Activated T-helper 2 cell treated with anti-CD3 and anti-CD28 coated beads, Interferon-gamma antibody, Interleukin-2, Interleukin-4, amounts not matched to agents 10 μg/mL and 5 μg/mL and 100 μg/mL, durations not matched to agents 14 hours and 24 hours and 36 hours (primary cell): ENCODE measurements at regions of chr3 and their contacts with region 1.

Region 1: DNA sequence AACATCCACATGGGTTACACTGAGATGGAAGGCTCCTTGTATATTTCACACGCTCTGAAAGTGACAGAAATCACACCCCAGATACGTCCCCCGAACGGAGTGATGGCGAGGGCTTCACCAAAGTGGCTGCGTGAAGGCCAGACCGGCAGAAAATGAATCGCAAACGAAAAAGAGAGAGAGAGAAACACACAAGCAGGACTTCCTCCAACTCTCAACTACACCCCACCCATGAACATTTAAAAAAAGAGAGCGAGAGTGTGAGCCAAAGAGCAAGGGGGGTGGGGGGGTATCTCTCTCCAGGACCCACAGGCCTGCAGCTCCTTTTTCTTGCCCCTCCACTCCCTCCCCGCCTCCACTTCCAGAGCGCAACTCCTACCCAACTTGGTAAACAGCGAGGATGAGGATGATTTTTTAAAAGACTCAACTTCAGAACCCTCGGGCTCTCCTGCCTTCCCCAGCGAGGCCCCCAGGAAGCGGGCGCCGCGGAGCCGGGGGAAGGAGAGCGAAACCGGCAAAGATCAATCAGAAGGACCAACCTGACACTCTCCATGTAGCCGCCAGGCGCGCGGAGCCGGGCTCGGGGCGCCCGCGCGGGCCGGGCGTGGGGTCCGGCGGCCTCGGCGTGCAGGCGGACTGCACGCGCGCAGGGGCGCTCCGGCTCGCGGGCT is 519.1 kb downstream of the FOXP1 start:
- DNase-seq: peak; percentile 68
- H3K4me3 Mint-ChIP-seq: no peak overlapping the region
- H3K27ac Mint-ChIP-seq: no peak overlapping the region
- H3K4me1 Mint-ChIP-seq: peaks cover 58% of the 10 kb centered on the region
- H3K27me3 Mint-ChIP-seq: no peaks in the 10 kb centered on the region

Region 2: GRCh38 chr3:70550723-70551319 is 513.6 kb before region 1 on chr3:
- intact Hi-C with region 1: loop called (anchors 10 kb)
- DNase-seq: peak; percentile 44
- H3K4me3 Mint-ChIP-seq: no peak overlapping the region
- H3K27ac Mint-ChIP-seq: no peak overlapping the region
- H3K4me1 Mint-ChIP-seq: no peaks in the 10 kb centered on the region
- H3K27me3 Mint-ChIP-seq: peaks cover 22% of the 10 kb centered on the region

Region 3: GRCh38 chr3:71050538-71051258 is 13.7 kb before region 1 on chr3:
- intact Hi-C with region 1: loop called (anchors 1 kb)
- DNase-seq: no peak
- H3K4me3 Mint-ChIP-seq: peak overlapping the region; percentile 2
- H3K27ac Mint-ChIP-seq: peak overlapping the region; percentile 86
- H3K4me1 Mint-ChIP-seq: peaks cover 95% of the 10 kb centered on the region
- H3K27me3 Mint-ChIP-seq: no peaks in the 10 kb centered on the region

Region 4: DNA sequence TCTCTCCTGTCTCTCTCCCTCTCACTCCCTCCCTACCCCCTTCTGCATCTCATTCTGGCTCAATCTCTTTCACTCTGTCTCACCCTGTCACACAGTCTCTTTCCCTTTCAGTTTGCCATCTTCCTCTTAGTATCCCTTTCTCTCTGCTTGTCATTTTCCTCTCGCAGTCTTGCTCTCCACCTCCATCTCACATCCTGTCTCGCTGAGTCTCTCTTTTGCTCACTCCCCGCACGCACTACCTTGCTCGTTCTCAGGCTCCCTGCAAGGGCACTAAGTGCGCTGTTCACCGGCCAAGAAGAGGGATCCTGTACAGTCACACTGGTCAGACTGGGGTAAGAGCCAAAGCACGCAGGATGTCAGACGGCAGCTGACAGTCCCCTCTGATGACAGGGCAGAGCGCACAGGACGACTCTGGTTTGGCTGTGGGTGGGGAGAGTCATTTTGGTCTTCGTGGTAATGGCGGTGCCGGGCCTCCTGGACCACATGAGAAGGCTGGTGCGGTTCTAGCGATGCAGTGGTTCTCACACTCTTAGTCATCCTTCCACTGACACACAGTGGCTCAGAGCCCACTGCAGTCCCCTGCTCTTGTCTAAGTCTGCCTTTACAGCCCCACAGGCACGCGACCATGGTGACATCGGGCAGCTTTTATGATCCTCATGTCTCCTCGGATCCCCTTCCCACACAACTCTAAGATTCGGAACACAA is 162.3 kb after region 1 on chr3:
- intact Hi-C with region 1: loop called (anchors 2 kb)
- DNase-seq: peak; percentile 86
- H3K4me3 Mint-ChIP-seq: peak overlapping the region; percentile 88
- H3K27ac Mint-ChIP-seq: peak overlapping the region; percentile 97
- H3K4me1 Mint-ChIP-seq: peaks cover 63% of the 10 kb centered on the region
- H3K27me3 Mint-ChIP-seq: peaks cover 1% of the 10 kb centered on the region

Region 5: DNA sequence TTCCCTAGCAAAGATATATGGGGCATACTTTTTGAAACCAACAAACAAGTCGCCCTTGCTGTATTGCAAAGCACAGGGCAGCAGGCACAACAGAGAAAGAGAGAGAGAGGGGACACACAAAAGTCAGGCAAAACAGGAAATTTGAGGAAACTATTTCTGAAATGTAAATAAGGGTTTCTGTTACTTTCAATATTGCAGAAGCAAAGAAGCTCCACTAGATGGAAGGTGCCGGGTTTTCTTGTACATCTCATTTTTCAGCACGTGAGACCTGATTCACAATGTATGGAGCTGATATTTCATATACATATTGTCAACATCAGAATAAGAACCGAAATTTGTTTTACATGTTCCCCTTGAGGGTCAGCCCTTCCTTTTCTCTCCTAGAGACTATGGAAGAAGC is 391.7 kb after region 1 on chr3:
- intact Hi-C with region 1: loop called (anchors 5 kb)
- DNase-seq: no peak
- H3K4me3 Mint-ChIP-seq: peak overlapping the region; percentile 70
- H3K27ac Mint-ChIP-seq: peak overlapping the region; percentile 89
- H3K4me1 Mint-ChIP-seq: peaks cover 85% of the 10 kb centered on the region
- H3K27me3 Mint-ChIP-seq: no peaks in the 10 kb centered on the region